Activated T-helper 1 cell treated with anti-CD3 and anti-CD28 coated beads, Interleukin-12 subunit alpha, Interleukin-12 subunit beta, Interleukin-2, Interleukin-4 antibody, amounts not matched to agents 30 ng/mL and 10 ng/mL and 1 ng/mL, durations not matched to agents 14 hours and 24 hours and 36 hours (primary cell): ENCODE measurements at regions of chr21 and their contacts with region 1.

Region 1: DNA sequence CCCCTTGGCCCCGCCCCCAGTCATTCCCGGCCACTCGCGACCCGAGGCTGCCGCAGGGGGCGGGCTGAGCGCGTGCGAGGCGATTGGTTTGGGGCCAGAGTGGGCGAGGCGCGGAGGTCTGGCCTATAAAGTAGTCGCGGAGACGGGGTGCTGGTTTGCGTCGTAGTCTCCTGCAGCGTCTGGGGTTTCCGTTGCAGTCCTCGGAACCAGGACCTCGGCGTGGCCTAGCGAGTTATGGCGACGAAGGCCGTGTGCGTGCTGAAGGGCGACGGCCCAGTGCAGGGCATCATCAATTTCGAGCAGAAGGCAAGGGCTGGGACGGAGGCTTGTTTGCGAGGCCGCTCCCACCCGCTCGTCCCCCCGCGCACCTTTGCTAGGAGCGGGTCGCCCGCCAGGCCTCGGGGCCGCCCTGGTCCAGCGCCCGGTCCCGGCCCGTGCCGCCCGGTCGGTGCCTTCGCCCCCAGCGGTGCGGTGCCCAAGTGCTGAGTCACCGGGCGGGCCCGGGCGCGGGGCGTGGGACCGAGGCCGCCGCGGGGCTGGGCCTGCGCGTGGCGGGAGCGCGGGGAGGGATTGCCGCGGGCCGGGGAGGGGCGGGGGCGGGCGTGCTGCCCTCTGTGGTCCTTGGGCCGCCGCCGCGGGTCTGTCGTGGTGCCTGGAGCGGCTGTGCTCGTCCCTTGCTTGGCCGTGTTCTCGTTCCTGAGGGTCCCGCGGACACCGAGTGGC is at the start of gene SOD1:
- DNase-seq: peak; percentile 96
- H3K4me3 Mint-ChIP-seq: peak within 1 kb of the TSS; percentile 99
- H3K27ac Mint-ChIP-seq: peak within 1 kb of the TSS; percentile 100
- H3K4me1 Mint-ChIP-seq: peaks cover 76% of the 10 kb centered on the region
- H3K27me3 Mint-ChIP-seq: no peaks in the 10 kb centered on the region
- total RNA-seq, gene SOD1: 346 and 354 TPM in 2 replicates

Region 2: DNA sequence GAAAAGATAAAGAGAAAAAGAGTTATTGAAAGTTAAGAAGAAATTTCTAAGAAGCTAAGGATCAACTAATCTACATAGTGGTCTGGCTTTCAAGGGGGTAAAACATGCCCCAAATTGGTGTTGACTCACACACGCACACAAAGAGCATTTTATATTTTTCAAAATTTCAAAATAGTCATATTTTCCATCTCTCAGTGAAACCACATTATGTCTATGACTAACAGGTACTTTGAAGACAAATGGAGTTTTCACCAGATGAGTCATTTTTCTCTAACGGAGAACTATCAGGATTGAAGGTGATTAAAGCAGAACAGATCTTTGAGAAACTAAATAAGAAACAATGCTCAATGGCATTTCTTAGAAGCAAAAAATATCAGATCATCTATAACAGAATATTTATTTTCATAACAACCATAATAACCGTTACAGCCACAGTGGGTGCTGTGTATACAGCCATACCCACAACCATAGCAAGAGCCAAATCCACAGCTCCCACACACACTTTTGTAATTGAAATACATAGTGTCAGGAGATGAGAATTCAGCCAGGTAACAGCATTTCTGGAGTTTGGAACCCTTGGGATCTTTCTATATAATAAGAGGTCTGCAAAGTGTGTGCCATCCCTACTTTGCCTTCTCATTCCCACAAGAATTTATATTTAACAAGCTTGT is 941.3 kb before region 1 on chr21 and contains the start of gene KRTAP21-3:
- intact Hi-C with region 1: loop called (anchors 2 kb)
- DNase-seq: no peak
- H3K4me3 Mint-ChIP-seq: peak within 1 kb of the TSS; percentile 7
- H3K27ac Mint-ChIP-seq: peak within 1 kb of the TSS; percentile 75
- H3K4me1 Mint-ChIP-seq: peaks cover 29% of the 10 kb centered on the region
- H3K27me3 Mint-ChIP-seq: peaks cover 2% of the 10 kb centered on the region
- total RNA-seq, gene KRTAP21-3: not detected in 2 replicates

Region 3: GRCh38 chr21:31647650-31648049 is 12.0 kb before region 1 on chr21:
- intact Hi-C with region 1: no loop called
- DNase-seq: no peak
- H3K4me3 Mint-ChIP-seq: no peak overlapping the region
- H3K27ac Mint-ChIP-seq: no peak overlapping the region
- H3K4me1 Mint-ChIP-seq: peaks cover 5% of the 10 kb centered on the region
- H3K27me3 Mint-ChIP-seq: peaks cover 12% of the 10 kb centered on the region